ENCODE measurements at regions of chr14 and their contacts with region 1.

Region 1: DNA sequence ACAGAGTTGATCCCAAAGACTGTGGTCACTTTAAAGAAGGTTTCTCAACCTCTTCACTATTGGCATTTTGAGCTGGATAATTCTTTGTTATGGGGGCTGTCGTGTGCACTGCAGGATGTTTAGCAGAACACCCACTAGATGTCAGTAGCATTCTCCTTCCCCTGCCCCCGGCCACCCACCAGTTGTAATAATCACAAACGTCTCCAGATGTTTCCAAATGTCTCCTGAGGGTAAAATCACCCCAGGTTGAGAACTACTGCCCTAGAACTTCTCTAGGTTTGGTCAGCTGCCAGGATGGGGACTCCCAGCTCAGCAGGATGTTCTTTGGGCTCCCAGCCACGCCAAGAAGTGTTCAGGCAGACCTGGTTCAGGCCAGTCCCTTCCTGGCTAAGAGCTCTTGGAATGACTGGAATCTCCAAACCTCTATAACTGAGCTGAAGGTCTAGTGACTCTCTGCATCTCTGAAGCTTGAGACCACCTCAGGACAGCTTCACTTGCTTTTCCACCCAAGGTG is 12.5 kb upstream of the AJUBA start:
- DNase-seq: peak in 5 of 10 donors; percentile 37 to 70 (median 55)
- ATAC-seq: peak; percentile 88 to 96
- H3K4me3 Mint-ChIP-seq: no peak overlapping the region
- H3K27ac Mint-ChIP-seq: peak overlapping the region in 1 of 10 donors; percentile 9
- H3K4me1 Mint-ChIP-seq: peaks cover 0 to 3% (median under 1%) of the 10 kb centered on the region in 4 donors
- H3K27me3 Mint-ChIP-seq: no peaks in the 10 kb centered on the region

Region 2: GRCh38 chr14:22766456-22767322 is 228.1 kb before region 1 on chr14 and contains the start of gene OXA1L:
- POLR2A ChIA-PET with region 1: no interaction called
- DNase-seq: peak; percentile 84 to 99 (median 96)
- ATAC-seq: peak; percentile 92 to 93
- H3K4me3 Mint-ChIP-seq: peak within 1 kb of the TSS; percentile 86 to 97 (median 91)
- H3K27ac Mint-ChIP-seq: peak within 1 kb of the TSS; percentile 94 to 98 (median 98)
- H3K4me1 Mint-ChIP-seq: peaks cover 21 to 36% (median 33%) of the 10 kb centered on the region in 4 donors
- H3K27me3 Mint-ChIP-seq: no peaks in the 10 kb centered on the region
- polyA plus RNA-seq, gene OXA1L: 56.3 to 67.4 (median 57.1) TPM

Region 3: DNA sequence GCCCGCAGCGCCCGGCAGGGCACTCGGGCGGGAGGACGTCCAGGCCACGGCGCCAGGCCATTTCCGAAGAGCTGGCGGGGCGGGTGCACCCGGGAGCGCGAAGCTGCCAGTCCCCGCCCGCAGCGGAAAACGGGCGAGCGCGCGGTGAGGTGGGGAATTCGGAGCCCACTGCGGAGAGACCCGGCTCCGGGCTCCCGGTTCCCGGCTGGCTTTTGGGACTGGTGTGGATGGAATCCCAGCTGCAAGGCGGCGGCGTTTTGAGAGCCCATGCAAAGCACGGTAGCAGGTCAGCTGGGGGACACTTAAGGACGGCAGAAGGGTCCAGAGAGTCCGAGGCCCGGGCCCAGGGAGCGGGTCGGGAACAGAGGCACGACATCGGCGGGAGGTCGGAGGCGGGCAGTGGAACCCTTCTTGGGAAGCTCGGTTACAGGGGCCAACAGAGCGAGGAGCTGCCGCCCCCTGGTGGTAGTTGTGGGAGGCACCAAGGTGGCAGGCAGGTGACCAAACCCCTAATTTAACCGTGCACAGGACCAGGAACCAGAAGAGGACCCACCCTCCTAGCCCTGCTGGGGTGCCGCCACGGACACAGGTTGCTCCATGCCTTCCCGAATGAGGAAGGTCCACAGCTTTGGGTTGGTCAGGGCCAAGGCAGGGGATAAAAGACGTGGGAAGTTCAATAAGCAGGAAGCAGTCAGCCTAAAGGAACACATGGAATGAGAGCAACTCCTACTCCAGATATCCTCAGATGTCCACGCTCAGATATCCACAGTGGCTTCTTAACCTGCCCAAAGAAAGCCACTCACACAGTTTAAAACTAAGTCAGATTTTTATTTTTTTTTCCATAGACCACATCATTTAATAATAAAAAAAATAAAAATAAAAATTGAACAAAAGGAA is 63.2 kb after region 1 on chr14:
- POLR2A ChIA-PET with region 1: interaction called, 22 read pairs
- DNase-seq: peak; percentile 73 to 90 (median 84)
- ATAC-seq: peak; percentile 73 to 75
- H3K4me3 Mint-ChIP-seq: peak overlapping the region; percentile 79 to 90 (median 88)
- H3K27ac Mint-ChIP-seq: peak overlapping the region in 8 of 10 donors; percentile 24 to 80 (median 66)
- H3K4me1 Mint-ChIP-seq: peaks cover 15 to 21% (median 20%) of the 10 kb centered on the region in 4 donors
- H3K27me3 Mint-ChIP-seq: no peaks in the 10 kb centered on the region